Dendritic cell treated with granulocyte-macrophage colony-stimulating factor and Interleukin-4, amounts not matched to agents 40 ng/mL and 50 ng/mL, for 4 days (primary cell): ENCODE measurements at regions of chr5 and their contacts with region 1.

Region 1: DNA sequence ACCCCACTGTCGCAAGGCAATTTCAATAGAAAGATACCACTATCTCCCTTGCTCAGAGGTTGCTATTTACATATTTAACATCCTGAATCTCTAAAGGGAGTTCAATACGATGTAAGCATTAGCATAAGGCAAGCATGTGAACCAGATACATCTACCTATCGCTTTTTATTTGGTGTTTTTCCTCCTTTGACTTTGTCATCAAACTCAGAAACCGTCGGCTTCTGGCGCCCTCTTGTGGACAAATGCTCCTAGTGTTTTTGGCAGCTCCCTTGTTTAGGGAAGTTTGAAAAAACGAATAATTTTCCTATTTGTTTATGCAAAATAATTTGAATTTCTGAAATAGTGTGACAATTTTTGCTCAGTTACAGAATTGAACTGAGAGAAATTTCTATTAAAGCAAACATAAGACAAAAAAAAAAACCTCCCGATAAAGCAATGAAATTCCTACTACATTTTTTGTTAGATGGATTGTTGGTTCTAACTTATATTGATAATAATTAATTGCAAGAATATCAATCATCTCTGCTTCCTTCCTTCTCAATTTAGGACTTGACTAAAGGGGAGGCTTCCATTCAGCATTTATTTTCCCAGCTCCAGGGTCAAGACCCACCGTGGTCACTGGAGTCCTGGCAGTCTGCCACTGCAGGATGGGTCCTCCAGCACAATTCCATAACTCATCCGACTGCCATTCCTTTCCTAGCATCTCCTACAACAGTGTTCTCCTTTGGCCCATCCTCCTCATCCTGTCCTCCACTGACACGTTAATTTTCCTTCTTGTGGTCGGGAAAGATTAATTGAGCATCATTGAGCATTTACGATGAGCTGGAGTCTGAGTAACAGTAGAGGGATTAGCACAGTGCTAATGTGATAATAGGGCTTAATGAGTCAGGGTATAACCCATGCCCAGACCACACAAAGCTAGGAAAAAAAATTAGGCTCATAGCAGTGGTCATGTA is 131.8 kb upstream of the CHD1 start:
- H3K4me3 Mint-ChIP-seq: no peak overlapping the region
- H3K27ac Mint-ChIP-seq: no peak overlapping the region
- H3K4me1 Mint-ChIP-seq: peaks cover 26% of the 10 kb centered on the region
- H3K27me3 Mint-ChIP-seq: no peaks in the 10 kb centered on the region

Region 2: GRCh38 chr5:98905857-98906690 is 154.5 kb before region 1 on chr5:
- intact Hi-C with region 1: loop called (anchors 1 kb)
- H3K4me3 Mint-ChIP-seq: no peak overlapping the region
- H3K27ac Mint-ChIP-seq: no peak overlapping the region
- H3K4me1 Mint-ChIP-seq: peaks cover 22% of the 10 kb centered on the region
- H3K27me3 Mint-ChIP-seq: no peaks in the 10 kb centered on the region